ENCODE measurements at regions of chr13 and their contacts with region 1.

Region 1: DNA sequence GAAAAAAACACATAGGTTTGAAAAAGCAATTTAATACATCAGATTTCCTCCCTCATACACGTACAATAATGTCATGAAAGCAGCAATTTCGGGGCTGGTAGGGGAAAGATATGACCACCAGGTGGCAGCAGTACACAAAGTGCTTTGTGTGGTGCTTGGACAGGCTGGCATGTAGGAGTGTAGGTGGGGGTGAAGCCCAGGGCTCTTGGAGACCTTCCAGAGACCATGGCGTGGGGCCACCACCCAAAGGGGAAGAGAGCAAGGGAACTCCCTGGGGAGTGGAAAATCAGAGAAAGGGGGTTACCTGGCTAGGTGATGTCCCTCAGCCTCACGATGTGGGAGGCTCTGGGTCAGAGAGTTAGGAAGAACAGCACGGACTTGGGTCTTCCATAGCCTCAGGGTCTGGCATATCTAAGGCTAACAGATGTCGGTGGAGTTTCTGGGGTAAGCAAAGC is 11.8 kb upstream of the CCNA1 start:
- DNase-seq: peak; percentile 86
- ATAC-seq: peak; percentile 88

Region 2: DNA sequence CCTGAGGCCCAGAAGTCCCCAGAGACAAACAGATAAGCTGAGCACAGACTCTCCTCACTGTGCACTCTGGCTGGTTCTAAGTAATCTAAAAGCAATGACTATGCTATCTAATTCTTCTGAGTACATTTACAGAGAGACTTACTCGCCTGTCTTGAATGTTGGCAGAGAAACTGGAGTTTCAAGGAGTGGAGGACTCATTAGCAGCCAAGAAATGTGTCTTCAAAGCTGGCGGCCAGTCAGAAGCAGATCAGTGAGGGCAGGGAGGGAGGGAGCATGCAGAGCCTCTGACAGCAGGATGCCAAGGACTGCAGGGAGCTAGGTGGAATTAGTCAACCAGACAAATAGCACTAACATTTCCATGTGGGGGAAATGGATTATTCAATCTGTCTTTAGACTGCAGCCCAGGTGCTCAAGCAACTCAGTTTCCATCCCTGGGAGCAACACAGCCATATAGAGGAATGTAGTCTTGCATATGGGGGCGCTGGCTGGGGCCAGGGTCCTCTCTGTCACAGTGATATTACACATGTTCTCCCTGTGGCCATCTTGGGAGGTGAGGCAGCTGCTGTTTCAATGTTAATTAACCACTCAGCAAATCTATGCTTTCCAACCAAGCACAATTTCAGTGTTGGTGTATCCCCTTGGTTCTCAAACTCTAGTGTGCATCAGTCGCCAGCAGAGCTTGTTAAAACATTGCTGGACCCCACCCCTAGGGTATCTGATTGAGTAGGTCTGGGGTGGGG is 109.8 kb after region 1 on chr13:
- intact Hi-C with region 1: no loop called
- DNase-seq: peak; percentile 59
- ATAC-seq: peak; percentile 59

Region 3: DNA sequence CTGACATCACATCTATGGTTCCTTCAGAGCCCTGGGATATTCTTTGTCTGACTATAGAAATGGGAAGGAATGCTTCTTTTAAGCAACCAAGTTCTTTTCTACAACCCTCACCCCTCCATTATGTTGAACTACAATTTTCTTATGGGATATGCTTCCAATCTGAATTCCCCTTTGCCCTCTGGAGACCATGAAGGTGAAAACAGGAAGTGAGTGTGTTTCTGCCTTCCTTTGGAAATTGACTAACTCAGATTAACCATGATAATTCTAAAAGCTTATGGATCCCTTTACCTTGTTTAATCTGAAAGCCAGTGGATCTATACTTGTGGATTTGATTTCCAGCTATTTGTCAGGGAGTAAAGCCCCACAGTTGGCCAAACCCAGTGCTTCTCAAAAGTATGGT is 162.5 kb after region 1 on chr13:
- intact Hi-C with region 1: no loop called
- DNase-seq: no peak
- ATAC-seq: no peak

Region 4: GRCh38 chr13:36736119-36736726 is 315.8 kb after region 1 on chr13:
- intact Hi-C with region 1: loop called (anchors 10 kb)
- DNase-seq: peak; percentile 71
- ATAC-seq: peak; percentile 48

Region 5: DNA sequence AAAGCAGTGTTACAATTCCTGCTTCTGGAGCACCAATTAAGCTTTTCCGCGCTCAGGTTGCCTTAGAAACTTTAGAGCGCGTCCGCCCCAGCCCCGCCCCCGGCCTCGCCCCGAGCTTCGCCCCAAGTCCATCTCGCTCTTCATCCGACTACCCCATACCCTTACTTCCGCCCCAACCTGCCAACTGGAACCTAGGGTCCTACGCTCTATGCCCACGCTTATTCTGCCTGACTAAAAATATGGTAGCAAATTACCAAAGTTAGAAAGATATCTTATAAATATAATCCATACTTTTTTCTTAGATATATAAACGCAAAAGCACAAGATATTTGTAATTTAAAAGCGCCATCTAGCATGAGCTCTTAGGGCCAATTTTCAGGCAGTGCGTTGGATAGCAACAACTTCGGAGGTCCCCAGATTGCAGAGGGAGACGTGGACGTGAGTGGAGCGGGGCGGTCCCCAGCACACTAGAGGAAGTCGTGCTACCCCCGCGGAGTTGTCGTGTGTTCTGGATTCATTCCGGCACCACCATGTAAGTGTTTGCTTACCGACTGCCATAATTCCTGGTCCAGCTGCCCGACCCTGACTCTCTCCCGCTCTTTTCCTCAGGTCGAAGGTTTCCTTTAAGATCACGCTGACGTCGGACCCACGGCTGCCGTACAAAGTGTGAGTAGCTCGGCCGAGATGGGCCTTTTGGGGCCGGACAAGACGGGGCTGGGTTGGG is 1929.1 kb after region 1 on chr13 and contains the start of gene UFM1:
- intact Hi-C with region 1: no loop called
- DNase-seq: peak; percentile 93
- ATAC-seq: peak; percentile 99
- total RNA-seq, gene UFM1: 65.9 TPM

Measured in sciatic nerve (tissue), 2 donors.